K562 (cell line): ENCODE measurements at regions of chr1 and their contacts with region 1.

Region 1: DNA sequence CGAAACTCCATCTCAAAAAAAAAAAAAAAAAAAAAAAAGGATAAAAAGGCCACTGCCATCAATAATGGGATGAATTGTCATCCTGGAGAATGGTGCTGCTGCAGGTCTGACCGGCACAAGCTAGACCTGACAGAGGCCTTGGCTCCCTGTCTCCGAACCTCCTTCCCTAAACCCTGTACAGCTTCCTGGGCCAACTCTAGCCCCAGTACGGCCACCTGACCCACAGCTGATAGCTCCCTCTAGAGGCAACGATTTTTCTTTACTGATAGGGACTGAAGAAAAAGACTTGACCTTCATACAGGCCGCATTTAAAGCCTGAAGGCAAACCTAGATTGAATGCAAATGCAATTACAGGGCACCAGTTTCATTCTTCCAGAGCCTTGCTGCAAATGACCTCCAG is 30.7 kb downstream of the NOL9 start:
- DNase-seq: peak; percentile 75 to 83 (median 79)
- ATAC-seq: peak; percentile 88
- H3K4me3 ChIP-seq: no peak overlapping the region
- H3K27ac ChIP-seq: no peak overlapping the region
- H3K4me1 ChIP-seq: peaks cover 0 to 7% of the 10 kb centered on the region in 2 experiments; a peak in 2 of 5 replicates
- H3K27me3 ChIP-seq: no peaks in the 10 kb centered on the region
- CTCF ChIP-seq: peak; percentile 84 to 93 (median 85)
- EP300 ChIP-seq: no peak
- POLR2A ChIP-seq: no peak
- RAD21 ChIP-seq: peak; percentile 14 to 72; a peak in 3 of 4 replicates

Region 2: DNA sequence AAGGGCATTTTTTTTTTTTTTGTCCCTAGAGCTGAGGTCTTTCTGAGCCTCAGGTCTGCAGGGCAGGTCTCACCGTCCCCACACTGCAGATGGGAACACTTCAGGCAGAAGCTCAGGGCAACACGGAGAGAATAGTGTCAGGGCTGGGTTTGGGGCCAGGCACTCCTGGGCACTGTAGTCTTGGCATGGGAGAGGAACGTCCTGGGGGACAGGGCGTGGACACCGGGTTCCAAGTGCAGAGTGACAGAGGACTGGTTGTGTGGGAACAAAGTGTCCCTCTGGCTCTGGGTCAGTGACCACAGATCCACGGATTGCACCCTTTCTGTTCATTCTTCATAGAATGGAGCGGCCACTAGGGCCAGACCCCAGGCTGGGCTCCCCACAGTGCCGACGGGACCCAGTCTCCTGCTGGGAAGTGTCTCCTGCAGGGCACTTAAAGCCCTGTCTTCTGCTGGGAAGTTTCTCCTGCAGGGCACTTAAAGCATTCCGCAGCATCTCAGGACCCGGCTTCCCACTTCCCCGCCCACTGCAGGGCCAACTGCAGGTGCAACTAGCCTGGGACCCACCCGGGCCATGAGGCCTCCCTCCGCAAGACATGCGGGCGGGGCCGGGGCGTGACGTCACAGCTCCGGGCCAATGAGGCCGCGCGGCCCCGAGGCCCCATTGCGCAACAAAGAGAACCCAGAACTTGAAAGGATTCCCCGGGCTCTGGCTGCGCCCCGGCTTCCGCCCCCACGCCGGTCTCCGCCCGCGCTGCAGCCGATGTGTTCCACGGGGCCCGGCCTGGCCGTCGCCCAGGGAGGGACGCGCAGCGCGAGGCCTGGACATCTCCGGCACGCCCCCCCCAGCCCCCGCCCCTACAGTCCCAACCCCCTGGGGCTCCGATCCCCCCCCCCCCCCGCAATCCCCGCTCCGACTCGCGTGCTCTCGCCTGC is 263.8 kb before region 1 on chr1:
- CTCF ChIA-PET with region 1: no interaction called
- POLR2A ChIA-PET with region 1: no interaction called
- in situ Hi-C with region 1: no loop called
- intact Hi-C with region 1: no loop called
- DNase-seq: peak; percentile 90 to 97 (median 94)
- ATAC-seq: peak; percentile 76
- H3K4me3 ChIP-seq: peak overlapping the region; percentile 50
- H3K27ac ChIP-seq: no peak overlapping the region
- H3K4me1 ChIP-seq: peaks cover 0 to 62% of the 10 kb centered on the region in 2 experiments; a peak in 3 of 5 replicates
- H3K27me3 ChIP-seq: peaks cover 0 to 17% of the 10 kb centered on the region in 2 experiments; a peak in 2 of 5 replicates
- CTCF ChIP-seq: no peak
- EP300 ChIP-seq: no peak
- POLR2A ChIP-seq: no peak
- RAD21 ChIP-seq: no peak

Region 3: DNA sequence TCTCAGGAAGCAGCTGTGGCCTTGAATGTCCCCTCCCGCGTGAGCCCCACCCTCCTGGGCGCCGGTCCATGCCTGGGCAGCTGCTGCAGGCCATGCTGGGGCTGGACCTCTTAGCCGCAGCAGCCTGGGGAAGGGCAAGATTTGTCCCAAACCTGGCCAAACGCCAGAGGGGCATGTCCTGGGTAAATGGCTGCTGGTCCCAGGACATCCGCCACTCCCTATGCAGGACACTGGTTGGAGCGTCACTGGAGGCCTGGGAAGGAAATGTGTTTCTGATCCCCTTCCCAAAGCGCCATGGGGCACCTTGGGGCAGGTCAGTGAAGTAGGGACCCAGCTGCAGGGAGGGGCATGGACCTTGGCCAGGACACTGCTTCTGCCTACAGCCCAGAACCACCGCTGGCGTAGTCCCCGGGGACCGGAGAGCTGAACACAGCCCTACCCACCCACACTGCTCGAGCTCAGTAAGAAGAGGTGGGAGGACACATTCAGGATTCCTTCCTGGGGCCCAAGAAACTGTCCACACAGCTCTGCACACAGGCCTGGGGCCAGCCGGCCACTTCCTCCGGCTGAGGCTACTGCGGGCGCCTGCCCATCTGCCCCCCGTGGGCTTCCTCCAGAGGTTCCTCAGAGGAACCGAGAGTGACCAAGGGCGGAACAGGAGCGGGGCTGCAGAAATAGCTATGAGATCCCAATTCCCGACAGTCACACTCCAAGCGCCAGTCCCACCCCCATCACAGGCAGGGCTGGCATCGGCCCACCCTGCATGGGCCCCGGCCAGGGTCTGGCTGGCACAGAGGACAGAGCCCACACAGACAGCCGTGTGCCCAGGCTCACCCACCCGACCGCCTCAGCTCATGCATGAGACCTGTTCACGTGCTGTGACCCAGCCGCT is 21.3 kb before region 1 on chr1:
- CTCF ChIA-PET with region 1: no interaction called
- POLR2A ChIA-PET with region 1: interaction called, 57 read pairs
- in situ Hi-C with region 1: no loop called
- intact Hi-C with region 1: no loop called
- DNase-seq: no peak
- ATAC-seq: peak; percentile 2; the same call in 1 of the 3 replicates
- H3K4me3 ChIP-seq: no peak overlapping the region
- H3K27ac ChIP-seq: no peak overlapping the region
- H3K4me1 ChIP-seq: peaks cover 0 to 61% of the 10 kb centered on the region in 2 experiments; a peak in 2 of 5 replicates
- H3K27me3 ChIP-seq: peaks cover 74 to 90% of the 10 kb centered on the region in 2 experiments
- CTCF ChIP-seq: no peak
- EP300 ChIP-seq: no peak
- POLR2A ChIP-seq: no peak
- RAD21 ChIP-seq: no peak

Region 4: DNA sequence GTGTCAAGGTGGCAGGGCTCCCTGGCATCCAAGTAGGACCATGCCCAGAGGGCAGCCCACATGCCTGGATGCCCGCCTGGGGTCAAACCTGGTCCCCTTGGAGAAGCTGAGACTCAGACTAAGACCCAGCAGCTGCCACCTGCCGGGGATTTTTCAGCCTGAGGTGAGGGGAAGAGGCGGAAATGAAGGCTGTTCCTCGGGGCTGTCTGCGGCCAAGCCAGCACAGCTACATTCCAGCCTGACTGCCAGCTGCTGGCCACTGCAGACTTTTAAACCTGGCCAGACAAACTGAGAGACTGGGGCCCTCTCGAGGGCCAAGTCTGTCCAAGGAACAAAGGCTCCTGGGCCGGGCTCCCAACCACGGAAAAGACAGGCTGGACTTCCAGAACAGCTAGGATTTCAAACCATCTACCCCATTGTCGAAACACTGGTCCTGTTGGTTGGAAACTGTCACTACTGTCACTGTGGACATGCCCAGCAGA is 10.2 kb before region 1 on chr1:
- CTCF ChIA-PET with region 1: no interaction called
- POLR2A ChIA-PET with region 1: interaction called, 21 read pairs
- in situ Hi-C with region 1: no loop called
- intact Hi-C with region 1: no loop called
- DNase-seq: no peak
- ATAC-seq: no peak; the same call in 2 of the 3 replicates
- H3K4me3 ChIP-seq: no peak overlapping the region
- H3K27ac ChIP-seq: no peak overlapping the region
- H3K4me1 ChIP-seq: peaks cover 3 to 32% of the 10 kb centered on the region in 2 experiments; a peak in 3 of 5 replicates
- H3K27me3 ChIP-seq: peaks cover 21 to 55% of the 10 kb centered on the region in 2 experiments; a peak in 4 of 5 replicates
- CTCF ChIP-seq: no peak
- EP300 ChIP-seq: no peak
- POLR2A ChIP-seq: no peak
- RAD21 ChIP-seq: no peak

Region 5: DNA sequence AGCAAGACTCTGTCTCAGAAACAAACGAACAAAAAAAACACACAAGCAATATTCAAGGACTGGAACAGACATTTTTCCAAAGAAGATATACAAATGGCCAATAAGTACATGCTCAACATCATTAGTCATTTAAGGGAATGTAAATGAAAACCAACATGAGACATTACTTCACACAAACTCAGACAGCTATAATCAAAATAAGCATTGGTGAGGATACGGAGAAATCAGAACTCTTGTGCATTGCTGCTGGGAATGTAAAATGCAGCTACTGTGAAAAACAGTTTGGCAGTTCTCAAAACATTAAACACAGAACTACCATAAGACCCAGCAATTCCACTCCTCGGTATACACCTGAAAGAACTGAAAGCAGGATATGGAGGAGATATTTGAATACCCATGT is 15.4 kb after region 1 on chr1:
- CTCF ChIA-PET with region 1: no interaction called
- POLR2A ChIA-PET with region 1: interaction called, 48 read pairs
- in situ Hi-C with region 1: no loop called
- intact Hi-C with region 1: no loop called
- DNase-seq: no peak
- ATAC-seq: no peak
- H3K4me3 ChIP-seq: no peak overlapping the region
- H3K27ac ChIP-seq: no peak overlapping the region
- H3K4me1 ChIP-seq: no peaks in the 10 kb centered on the region
- H3K27me3 ChIP-seq: no peaks in the 10 kb centered on the region
- CTCF ChIP-seq: no peak
- EP300 ChIP-seq: no peak
- POLR2A ChIP-seq: no peak
- RAD21 ChIP-seq: no peak